ENCODE measurements at regions of chr21 and their contacts with region 1.

Region 1: GRCh38 chr21:33801424-33802420 is 113.9 kb downstream of the ATP5PO start:
- DNase-seq: peak; percentile 98
- ATAC-seq: peak; percentile 99
- H3K4me3 ChIP-seq: peak overlapping the region; percentile 13; the same call in 1 of the 2 replicates
- H3K27ac ChIP-seq: peak overlapping the region; percentile 85
- H3K4me1 ChIP-seq: peaks cover 26% of the 10 kb centered on the region
- H3K27me3 ChIP-seq: no peaks in the 10 kb centered on the region
- CTCF ChIP-seq: no peak

Region 2: DNA sequence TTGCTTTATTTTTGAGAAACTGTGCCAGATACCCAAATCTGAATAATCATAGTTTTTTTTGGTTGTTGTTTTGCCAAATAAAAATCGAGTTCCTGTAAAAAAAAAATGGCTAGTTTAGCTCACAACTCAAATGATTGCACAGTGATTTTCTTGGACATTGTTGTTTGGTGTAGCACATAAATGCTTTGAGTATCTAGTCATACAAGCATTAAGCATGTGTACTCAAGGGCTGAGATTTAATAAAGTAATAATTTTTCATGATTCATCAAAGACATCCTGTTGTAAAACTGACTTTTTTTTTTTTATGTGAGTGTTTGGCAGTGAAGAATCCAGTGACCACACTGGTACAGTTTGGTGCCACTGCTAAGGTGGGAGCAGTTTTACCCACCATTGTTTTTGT is 140.6 kb before region 1 on chr21:
- CTCF ChIA-PET with region 1: no interaction called
- POLR2A ChIA-PET with region 1: no interaction called
- intact Hi-C with region 1: loop called (anchors 1 kb)
- DNase-seq: peak; percentile 73
- ATAC-seq: peak; percentile 92
- H3K4me3 ChIP-seq: no peak overlapping the region
- H3K27ac ChIP-seq: no peak overlapping the region
- H3K4me1 ChIP-seq: peaks cover 9% of the 10 kb centered on the region
- H3K27me3 ChIP-seq: no peaks in the 10 kb centered on the region
- CTCF ChIP-seq: no peak

Region 3: GRCh38 chr21:33761441-33762036 is 40.2 kb before region 1 on chr21:
- CTCF ChIA-PET with region 1: no interaction called
- POLR2A ChIA-PET with region 1: no interaction called
- intact Hi-C with region 1: loop called (anchors 1 kb)
- DNase-seq: peak; percentile 93
- ATAC-seq: peak; percentile 99
- H3K4me3 ChIP-seq: peak overlapping the region; percentile 28; the same call in 1 of the 2 replicates
- H3K27ac ChIP-seq: peak overlapping the region; percentile 57
- H3K4me1 ChIP-seq: peaks cover 27% of the 10 kb centered on the region
- H3K27me3 ChIP-seq: no peaks in the 10 kb centered on the region
- CTCF ChIP-seq: peak; percentile 33; the same call in 1 of the 2 replicates

Region 4: GRCh38 chr21:33915368-33916199 is 113.9 kb after region 1 on chr21 and contains the start of gene ATP5PO:
- CTCF ChIA-PET with region 1: no interaction called
- POLR2A ChIA-PET with region 1: no interaction called
- intact Hi-C with region 1: no loop called
- DNase-seq: peak; percentile 99
- ATAC-seq: peak; percentile 99
- H3K4me3 ChIP-seq: peak within 1 kb of the TSS; percentile 85
- H3K27ac ChIP-seq: peak within 1 kb of the TSS; percentile 36
- H3K4me1 ChIP-seq: peaks cover 13% of the 10 kb centered on the region
- H3K27me3 ChIP-seq: no peaks in the 10 kb centered on the region
- CTCF ChIP-seq: no peak
- total RNA-seq, gene ATP5PO: 288 and 386 TPM in 2 replicates

Measured in PC-3 (cell line).